ENCODE measurements at regions of chr5 and their contacts with region 1.

Region 1: DNA sequence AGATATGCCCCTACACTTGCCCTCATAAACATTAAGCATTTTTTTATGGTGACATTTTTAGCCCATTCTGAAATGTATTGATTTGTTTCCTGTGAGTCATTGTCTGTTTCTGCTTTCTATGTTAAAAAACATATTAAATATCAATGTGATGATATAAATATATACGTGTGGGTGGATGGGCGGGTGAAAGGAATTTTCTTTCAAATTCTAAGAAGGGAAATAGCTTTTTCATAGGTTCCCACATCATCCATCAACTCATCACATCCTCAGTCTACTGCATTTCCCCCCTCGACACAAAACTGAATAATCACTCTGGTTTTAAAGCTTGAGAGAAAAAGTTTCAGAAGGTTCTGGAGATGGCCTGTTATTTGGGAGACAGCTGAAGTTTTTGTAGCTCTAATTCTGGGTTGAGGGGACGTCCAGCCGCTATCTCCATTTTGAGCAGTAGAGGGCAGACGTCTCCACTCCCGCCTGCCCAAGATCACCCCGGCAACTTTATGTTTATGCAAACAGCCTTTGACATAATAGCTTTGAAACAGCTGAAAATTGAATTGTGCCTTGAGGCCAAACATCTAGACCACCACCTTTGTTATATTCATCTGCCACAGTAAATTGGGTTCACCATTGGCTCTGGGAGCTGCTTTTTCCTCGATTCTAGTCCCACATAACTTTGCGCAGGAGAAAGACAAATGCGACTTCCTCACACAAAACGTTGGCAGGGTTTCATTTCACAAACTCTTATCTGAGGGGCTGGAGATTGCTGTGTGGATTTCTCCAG is 216.2 kb upstream of the CLINT1 start:
- DNase-seq: peak; percentile 77
- H3K4me3 ChIP-seq: peak overlapping the region in 3 of 4 donors; percentile 23 to 38 (median 31)
- H3K27ac ChIP-seq: peak overlapping the region in 3 of 4 donors; percentile 20 to 47 (median 34)
- H3K4me1 ChIP-seq: no peaks in the 10 kb centered on the region
- H3K27me3 ChIP-seq: no peaks in the 10 kb centered on the region
- CTCF ChIP-seq: peak; percentile 38 to 81 (median 58)
- EP300 ChIP-seq: no peak
- POLR2A ChIP-seq: no peak

Region 2: DNA sequence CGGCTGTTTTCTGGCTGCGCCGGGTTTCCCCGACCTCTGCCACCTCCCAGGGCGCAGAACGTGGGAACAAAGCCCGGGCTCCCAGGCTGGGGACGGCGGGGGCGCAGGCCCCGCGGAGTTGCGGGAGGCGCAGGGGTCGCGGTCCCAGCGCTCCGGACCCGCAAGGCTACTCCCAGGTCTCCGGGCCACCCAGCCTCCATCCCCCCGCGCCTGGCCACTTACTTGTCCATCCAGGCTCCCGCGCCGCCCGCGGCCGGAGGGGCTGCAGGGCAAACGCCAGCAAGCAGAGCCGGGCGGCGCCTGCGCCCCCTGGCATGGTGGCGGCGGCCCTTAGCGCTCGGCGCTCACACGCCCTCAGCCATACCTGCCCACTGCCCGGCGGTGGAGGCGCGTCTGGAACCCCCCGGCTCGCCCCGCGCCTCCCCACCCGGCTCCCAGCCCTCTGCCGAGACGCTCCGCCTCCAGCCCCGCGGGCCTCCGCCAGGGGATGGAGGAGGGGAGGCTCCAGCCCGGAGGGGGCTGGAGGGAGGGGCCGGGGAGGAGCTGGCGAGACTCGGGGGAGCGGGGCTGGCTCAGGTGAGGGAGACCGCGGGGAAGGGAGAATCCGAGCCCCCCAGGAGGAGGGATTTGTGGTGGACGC is 499.7 kb before region 1 on chr5 and contains the start of gene ADAM19:
- intact Hi-C with region 1: no loop called
- DNase-seq: peak; percentile 83
- H3K4me3 ChIP-seq: peak within 1 kb of the TSS; percentile 77 to 89 (median 79)
- H3K27ac ChIP-seq: peak within 1 kb of the TSS; percentile 91 to 95 (median 94)
- H3K4me1 ChIP-seq: peaks cover 0 to 45% (median 34%) of the 10 kb centered on the region in 4 donors
- H3K27me3 ChIP-seq: no peaks in the 10 kb centered on the region
- CTCF ChIP-seq: peak; percentile 9 to 52 (median 32)
- EP300 ChIP-seq: no peak
- POLR2A ChIP-seq: peak in 1 of 2 donors; percentile 62
- total RNA-seq, gene ADAM19: 18.8 to 53.2 (median 35.0) TPM

Region 3: GRCh38 chr5:159106569-159107282 is 1031.5 kb after region 1 on chr5:
- intact Hi-C with region 1: loop called (anchors 2 kb)
- DNase-seq: peak; percentile 88
- H3K4me3 ChIP-seq: peak overlapping the region; percentile 8 to 36 (median 32)
- H3K27ac ChIP-seq: peak overlapping the region in 1 of 4 donors; percentile 51
- H3K4me1 ChIP-seq: peaks cover 0 to 26% (median 24%) of the 10 kb centered on the region in 4 donors
- H3K27me3 ChIP-seq: peaks cover 21 to 68% (median 55%) of the 10 kb centered on the region in 3 donors
- CTCF ChIP-seq: peak; percentile 73 to 91 (median 86)
- EP300 ChIP-seq: no peak
- POLR2A ChIP-seq: no peak

Region 4: GRCh38 chr5:159133041-159133741 is 1058.0 kb after region 1 on chr5:
- intact Hi-C with region 1: loop called (anchors 5 kb)
- DNase-seq: no peak
- H3K4me3 ChIP-seq: no peak overlapping the region
- H3K27ac ChIP-seq: no peak overlapping the region
- H3K4me1 ChIP-seq: peaks cover 0 to 11% (median 5%) of the 10 kb centered on the region in 4 donors
- H3K27me3 ChIP-seq: no peaks in the 10 kb centered on the region
- CTCF ChIP-seq: peak; percentile 28 to 76 (median 56)
- EP300 ChIP-seq: no peak
- POLR2A ChIP-seq: no peak